CD8-positive, alpha-beta T cell (primary cell): ENCODE measurements at regions of chr7 and their contacts with region 1.

Region 1: GRCh38 chr7:36115448-36116321 is 37.4 kb upstream of the EEPD1 start:
- DNase-seq: peak in 6 of 9 experiments; percentile 8 to 52 (median 19)
- ATAC-seq: peak; percentile 36
- H3K4me3 ChIP-seq: no peak overlapping the region
- H3K4me3 Mint-ChIP-seq: no peak overlapping the region
- H3K27ac ChIP-seq: no peak overlapping the region
- H3K27ac Mint-ChIP-seq: no peak overlapping the region
- H3K4me1 ChIP-seq: no peaks in the 10 kb centered on the region
- H3K4me1 Mint-ChIP-seq: peaks cover 15% of the 10 kb centered on the region
- H3K27me3 ChIP-seq: peaks cover 0 to 2% of the 10 kb centered on the region in 2 experiments
- H3K27me3 Mint-ChIP-seq: no peaks in the 10 kb centered on the region
- CTCF ChIP-seq: no peak

Region 2: GRCh38 chr7:36182854-36183604 is 67.3 kb after region 1 on chr7:
- CTCF ChIA-PET with region 1: no interaction called
- POLR2A ChIA-PET with region 1: no interaction called
- intact Hi-C with region 1: loop called in 1 of 2 experiments (anchors 10 kb)
- DNase-seq: no peak
- ATAC-seq: no peak
- H3K4me3 ChIP-seq: no peak overlapping the region
- H3K4me3 Mint-ChIP-seq: no peak overlapping the region
- H3K27ac ChIP-seq: no peak overlapping the region
- H3K27ac Mint-ChIP-seq: no peak overlapping the region
- H3K4me1 ChIP-seq: no peaks in the 10 kb centered on the region
- H3K4me1 Mint-ChIP-seq: no peaks in the 10 kb centered on the region
- H3K27me3 ChIP-seq: no peaks in the 10 kb centered on the region
- H3K27me3 Mint-ChIP-seq: no peaks in the 10 kb centered on the region
- CTCF ChIP-seq: no peak